ENCODE measurements at regions of chr7 and their contacts with region 1.

Region 1: DNA sequence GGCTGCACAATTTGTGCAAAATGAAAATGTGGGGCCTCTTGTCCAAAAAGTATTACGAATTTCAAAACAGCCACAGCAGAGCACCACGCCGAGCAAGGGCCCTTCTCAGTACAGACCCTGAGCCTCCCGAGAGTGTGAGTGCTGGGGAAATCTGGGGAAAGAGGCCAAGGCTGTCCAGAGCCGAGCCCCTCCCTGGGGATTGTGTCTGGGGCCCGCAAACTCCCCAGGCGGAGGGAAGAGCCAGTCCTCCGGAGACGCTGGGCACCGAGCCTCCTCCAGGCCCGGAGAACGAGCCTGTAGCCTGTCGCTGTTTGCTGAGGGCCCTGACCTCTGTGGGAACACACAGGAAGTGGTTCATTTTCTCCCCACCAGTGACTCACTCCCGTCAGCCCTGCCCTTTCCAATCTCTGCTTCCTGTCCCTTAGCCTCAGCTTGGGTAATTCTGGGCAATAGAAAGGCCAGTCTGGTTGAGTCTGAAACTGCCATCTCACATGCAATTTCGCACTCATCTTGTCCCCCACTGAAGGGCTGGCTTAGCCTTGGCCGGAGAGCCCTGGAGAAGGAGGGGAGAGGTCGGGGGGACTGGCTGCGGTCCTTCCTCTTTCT is 19.5 kb upstream of the GNA12 start:
- DNase-seq: peak; percentile 92
- ATAC-seq: peak; percentile 91
- H3K4me3 Mint-ChIP-seq: peak overlapping the region; percentile 71
- H3K27ac Mint-ChIP-seq: peak overlapping the region; percentile 96
- H3K4me1 Mint-ChIP-seq: peaks cover 28% of the 10 kb centered on the region
- H3K27me3 Mint-ChIP-seq: no peaks in the 10 kb centered on the region
- CTCF ChIP-seq: no peak

Region 2: GRCh38 chr7:2757904-2758672 is 105.5 kb before region 1 on chr7:
- CTCF ChIA-PET with region 1: interaction called, 21 read pairs
- POLR2A ChIA-PET with region 1: interaction called, 3 read pairs
- intact Hi-C with region 1: no loop called
- DNase-seq: peak; percentile 92
- ATAC-seq: peak; percentile 96
- H3K4me3 Mint-ChIP-seq: peak overlapping the region; percentile 67
- H3K27ac Mint-ChIP-seq: peak overlapping the region; percentile 98
- H3K4me1 Mint-ChIP-seq: peaks cover 43% of the 10 kb centered on the region
- H3K27me3 Mint-ChIP-seq: no peaks in the 10 kb centered on the region
- CTCF ChIP-seq: no peak

Region 3: GRCh38 chr7:2894118-2894940 is 30.8 kb after region 1 on chr7:
- CTCF ChIA-PET with region 1: interaction called, 24 read pairs
- POLR2A ChIA-PET with region 1: no interaction called
- intact Hi-C with region 1: no loop called
- DNase-seq: peak; percentile 83
- ATAC-seq: peak; percentile 71
- H3K4me3 Mint-ChIP-seq: peak overlapping the region; percentile 73
- H3K27ac Mint-ChIP-seq: peak overlapping the region; percentile 95
- H3K4me1 Mint-ChIP-seq: peaks cover 20% of the 10 kb centered on the region
- H3K27me3 Mint-ChIP-seq: no peaks in the 10 kb centered on the region
- CTCF ChIP-seq: no peak

Region 4: DNA sequence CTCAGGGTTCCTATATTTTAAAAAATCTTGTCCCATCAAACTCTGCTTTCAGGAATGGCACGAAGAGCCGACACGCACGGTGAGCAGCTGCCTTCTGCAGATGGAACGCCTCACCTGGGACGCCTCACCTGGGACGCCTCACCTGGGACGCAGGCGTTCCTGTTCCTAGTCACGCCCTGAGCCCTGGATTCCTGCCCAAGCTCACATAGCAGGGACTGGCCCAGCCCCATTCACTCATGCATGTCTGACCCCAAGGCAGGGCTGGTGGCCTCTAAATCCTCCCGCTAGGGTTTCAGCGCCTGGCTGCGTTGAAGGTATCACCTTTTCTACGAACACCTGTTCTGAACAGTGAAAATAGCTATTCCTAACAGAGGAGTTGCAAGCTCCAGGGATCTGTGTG is 130.3 kb after region 1 on chr7:
- CTCF ChIA-PET with region 1: no interaction called
- POLR2A ChIA-PET with region 1: no interaction called
- intact Hi-C with region 1: no loop called
- DNase-seq: no peak
- ATAC-seq: no peak
- H3K4me3 Mint-ChIP-seq: no peak overlapping the region
- H3K27ac Mint-ChIP-seq: no peak overlapping the region
- H3K4me1 Mint-ChIP-seq: peaks cover 13% of the 10 kb centered on the region
- H3K27me3 Mint-ChIP-seq: no peaks in the 10 kb centered on the region
- CTCF ChIP-seq: no peak

Region 5: DNA sequence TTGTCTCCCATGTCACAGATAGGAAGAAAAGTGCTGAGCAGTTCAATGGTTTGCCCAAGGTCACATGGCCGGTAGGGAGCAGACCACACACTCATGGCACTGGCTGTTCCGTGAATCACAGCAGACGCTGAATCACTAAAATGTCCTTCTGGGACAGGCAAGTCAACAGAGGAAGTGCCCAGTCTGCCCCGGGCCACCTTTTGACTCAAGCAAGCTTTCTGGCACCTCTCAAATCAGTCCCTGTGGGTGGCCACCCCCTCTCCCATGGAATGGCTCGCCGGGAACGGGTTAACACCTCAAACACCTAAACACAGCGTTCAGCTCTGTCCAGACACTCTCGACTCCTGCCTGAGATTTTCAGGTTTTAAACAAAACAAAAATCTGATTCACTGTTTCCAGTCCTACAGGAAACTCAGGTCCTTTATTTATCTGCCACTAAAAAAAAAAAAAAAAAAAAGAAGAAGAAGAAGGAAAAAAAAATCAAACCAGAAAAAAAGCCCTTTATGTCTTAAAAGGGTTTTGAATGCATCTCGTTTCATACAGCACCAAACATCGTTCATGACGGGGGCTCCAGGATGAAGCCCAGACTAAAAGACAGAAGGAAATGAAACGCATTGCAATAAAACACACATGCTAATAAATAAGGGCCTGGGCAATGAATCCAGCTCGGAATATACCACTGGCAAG is 164.7 kb after region 1 on chr7:
- CTCF ChIA-PET with region 1: no interaction called
- POLR2A ChIA-PET with region 1: no interaction called
- intact Hi-C with region 1: no loop called
- DNase-seq: peak; percentile 79
- ATAC-seq: peak; percentile 88
- H3K4me3 Mint-ChIP-seq: peak overlapping the region; percentile 63
- H3K27ac Mint-ChIP-seq: peak overlapping the region; percentile 93
- H3K4me1 Mint-ChIP-seq: peaks cover 58% of the 10 kb centered on the region
- H3K27me3 Mint-ChIP-seq: no peaks in the 10 kb centered on the region
- CTCF ChIP-seq: no peak

Region 6: DNA sequence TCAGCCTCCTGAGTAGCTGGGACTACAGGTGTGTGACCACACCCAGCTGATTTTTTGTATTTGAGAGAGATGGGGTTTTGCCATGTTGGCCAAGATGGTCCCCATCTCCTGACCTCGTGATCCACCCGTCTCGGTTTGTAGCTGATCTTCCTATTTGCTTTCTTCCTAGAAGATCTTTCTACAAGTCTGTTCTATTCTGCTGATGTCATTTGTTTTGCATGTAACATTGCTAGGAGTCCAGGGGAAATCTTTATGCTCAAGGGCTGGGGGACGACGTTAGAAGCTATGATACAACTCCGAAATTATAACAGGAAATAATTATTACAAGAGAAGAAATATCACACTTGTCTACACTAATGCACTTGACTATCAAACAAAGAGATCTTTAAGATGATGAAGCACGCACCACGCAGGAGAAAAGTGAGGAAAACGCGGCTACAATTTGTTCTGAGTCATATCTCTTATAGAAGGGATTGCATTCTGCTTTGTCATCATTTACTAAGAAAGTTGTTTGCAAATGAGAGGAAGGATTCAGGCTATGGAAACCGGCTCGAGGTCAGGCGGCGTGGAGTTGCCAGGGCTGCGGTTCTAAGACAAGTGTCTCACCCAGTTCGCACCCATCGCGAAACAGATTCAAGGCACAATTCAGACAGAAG is 283.1 kb after region 1 on chr7:
- CTCF ChIA-PET with region 1: interaction called, 18 read pairs
- POLR2A ChIA-PET with region 1: no interaction called
- intact Hi-C with region 1: no loop called
- DNase-seq: peak; percentile 16
- ATAC-seq: no peak
- H3K4me3 Mint-ChIP-seq: no peak overlapping the region
- H3K27ac Mint-ChIP-seq: no peak overlapping the region
- H3K4me1 Mint-ChIP-seq: peaks cover 10% of the 10 kb centered on the region
- H3K27me3 Mint-ChIP-seq: no peaks in the 10 kb centered on the region
- CTCF ChIP-seq: no peak

Region 7: DNA sequence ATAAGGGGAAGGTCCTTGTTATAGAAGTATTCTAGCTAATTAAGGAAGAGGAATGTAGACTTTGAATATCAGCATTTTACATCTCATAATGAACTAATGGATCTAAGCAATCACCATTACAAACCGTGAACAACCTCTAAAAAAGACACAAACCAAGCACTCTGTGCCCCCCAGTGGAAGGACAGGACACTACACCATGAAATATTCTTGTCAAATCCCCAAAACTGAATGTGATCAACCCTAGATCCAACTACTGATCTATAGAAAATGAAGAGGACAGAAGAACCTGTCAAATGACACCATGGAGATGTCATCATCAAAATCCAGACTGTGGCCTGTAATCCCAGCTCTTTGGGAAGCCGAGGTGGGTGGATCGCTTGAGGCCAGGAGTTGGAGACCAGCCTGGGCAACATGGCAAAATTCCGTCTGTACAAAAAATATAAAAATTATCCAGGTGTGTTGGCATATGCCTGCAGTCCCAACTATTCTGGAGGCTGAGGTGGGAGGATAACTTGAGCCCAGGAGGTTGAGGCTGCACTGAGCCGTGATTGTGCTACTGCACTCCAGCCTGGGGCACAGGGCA is 291.4 kb after region 1 on chr7:
- CTCF ChIA-PET with region 1: interaction called, 19 read pairs
- POLR2A ChIA-PET with region 1: no interaction called
- intact Hi-C with region 1: no loop called
- DNase-seq: peak; percentile 84
- ATAC-seq: peak; percentile 94
- H3K4me3 Mint-ChIP-seq: no peak overlapping the region
- H3K27ac Mint-ChIP-seq: no peak overlapping the region
- H3K4me1 Mint-ChIP-seq: peaks cover 22% of the 10 kb centered on the region
- H3K27me3 Mint-ChIP-seq: no peaks in the 10 kb centered on the region
- CTCF ChIP-seq: peak; percentile 83

Region 8: DNA sequence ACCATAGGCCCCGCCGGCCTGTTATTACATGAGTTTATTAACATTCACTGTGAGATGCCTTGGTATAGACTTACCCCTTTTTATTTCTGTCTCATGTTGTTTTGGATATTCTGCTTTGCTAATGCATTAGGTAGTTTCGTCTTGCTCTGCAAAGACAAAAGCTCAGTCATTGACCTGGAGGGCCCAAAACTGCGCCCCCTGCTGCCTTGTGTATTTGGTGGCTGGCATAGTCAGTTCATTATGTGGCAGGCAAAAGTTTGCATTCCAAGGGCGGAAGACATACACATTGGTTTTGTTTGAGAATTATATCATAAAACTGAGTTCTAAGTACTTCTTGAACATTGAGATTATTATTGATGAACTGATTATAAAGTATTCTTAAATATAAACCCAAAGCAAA is 810.0 kb after region 1 on chr7:
- CTCF ChIA-PET with region 1: interaction called, 10 read pairs
- POLR2A ChIA-PET with region 1: no interaction called
- intact Hi-C with region 1: no loop called
- DNase-seq: peak; percentile 75
- ATAC-seq: no peak
- H3K4me3 Mint-ChIP-seq: no peak overlapping the region
- H3K27ac Mint-ChIP-seq: no peak overlapping the region
- H3K4me1 Mint-ChIP-seq: no peaks in the 10 kb centered on the region
- H3K27me3 Mint-ChIP-seq: no peaks in the 10 kb centered on the region
- CTCF ChIP-seq: peak; percentile 54